ENCODE measurements at regions of chr4 and their contacts with region 1.

Region 1: GRCh38 chr4:1746265-1746691 is 25.0 kb downstream of the TACC3 start:
- DNase-seq: peak; percentile 96
- H3K4me3 ChIP-seq: no peak overlapping the region; a peak in 1 of 4 replicates
- H3K27ac ChIP-seq: no peak overlapping the region
- H3K4me1 ChIP-seq: peaks cover 0 to 7% of the 10 kb centered on the region in 2 experiments; a peak in 1 of 4 replicates
- H3K27me3 ChIP-seq: no peaks in the 10 kb centered on the region
- CTCF ChIP-seq: peak; percentile 79
- EP300 ChIP-seq: no peak
- RAD21 ChIP-seq: peak; percentile 69

Region 2: GRCh38 chr4:1732911-1733310 is 13.4 kb before region 1 on chr4:
- CTCF ChIA-PET with region 1: interaction called, 11 read pairs
- POLR2A ChIA-PET with region 1: no interaction called
- DNase-seq: no peak
- H3K4me3 ChIP-seq: no peak overlapping the region
- H3K27ac ChIP-seq: no peak overlapping the region
- H3K4me1 ChIP-seq: peaks cover 4% of the 10 kb centered on the region in 2 experiments; a peak in 3 of 4 replicates
- H3K27me3 ChIP-seq: no peaks in the 10 kb centered on the region
- CTCF ChIP-seq: no peak
- EP300 ChIP-seq: no peak
- RAD21 ChIP-seq: no peak

Region 3: DNA sequence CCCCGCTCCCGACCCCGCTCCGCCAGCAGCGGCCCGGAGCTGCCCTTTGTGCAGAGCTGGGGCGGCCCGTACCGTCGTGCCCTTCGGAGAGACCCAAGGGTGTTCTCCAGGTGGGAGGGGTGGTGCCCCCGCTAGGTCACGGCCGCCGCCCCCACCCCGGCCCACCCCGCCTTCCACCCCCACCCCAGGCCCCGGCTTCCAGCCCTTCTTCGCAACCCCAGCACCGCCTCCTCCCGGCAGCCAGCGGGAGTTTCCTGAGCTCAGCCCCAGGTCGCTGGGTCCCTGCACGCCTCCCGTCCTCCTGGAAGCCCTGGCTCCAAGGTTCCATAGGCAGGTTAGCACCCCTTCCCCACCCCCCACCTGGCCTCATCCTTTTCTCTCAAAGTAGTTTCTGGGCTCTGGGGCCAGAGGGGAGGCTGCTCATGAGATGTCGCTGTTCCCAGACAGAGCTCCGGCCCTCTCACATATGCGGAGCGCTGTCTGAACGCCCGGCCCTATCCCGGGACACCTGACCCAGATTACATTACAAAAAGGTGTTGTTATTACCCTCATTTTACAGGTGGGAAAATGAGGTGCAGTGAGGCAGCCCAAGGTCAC is 21.6 kb after region 1 on chr4:
- CTCF ChIA-PET with region 1: interaction called, 19 read pairs
- POLR2A ChIA-PET with region 1: no interaction called
- DNase-seq: peak; percentile 95
- H3K4me3 ChIP-seq: peak overlapping the region in 1 of 2 experiments; percentile 52; a peak in 2 of 4 replicates
- H3K27ac ChIP-seq: no peak overlapping the region; a peak in 1 of 4 replicates
- H3K4me1 ChIP-seq: peaks cover 0 to 19% of the 10 kb centered on the region in 2 experiments; a peak in 1 of 4 replicates
- H3K27me3 ChIP-seq: no peaks in the 10 kb centered on the region
- CTCF ChIP-seq: peak; percentile 37
- EP300 ChIP-seq: no peak
- RAD21 ChIP-seq: peak; percentile 27; the same call in 1 of the 2 replicates

Region 4: GRCh38 chr4:1784789-1785591 is 38.7 kb after region 1 on chr4:
- CTCF ChIA-PET with region 1: interaction called, 16 read pairs
- POLR2A ChIA-PET with region 1: no interaction called
- DNase-seq: peak; percentile 90
- H3K4me3 ChIP-seq: no peak overlapping the region
- H3K27ac ChIP-seq: no peak overlapping the region
- H3K4me1 ChIP-seq: peaks cover 0 to 8% of the 10 kb centered on the region in 2 experiments; a peak in 1 of 4 replicates
- H3K27me3 ChIP-seq: no peaks in the 10 kb centered on the region
- CTCF ChIP-seq: no peak
- EP300 ChIP-seq: no peak
- RAD21 ChIP-seq: no peak

Region 5: DNA sequence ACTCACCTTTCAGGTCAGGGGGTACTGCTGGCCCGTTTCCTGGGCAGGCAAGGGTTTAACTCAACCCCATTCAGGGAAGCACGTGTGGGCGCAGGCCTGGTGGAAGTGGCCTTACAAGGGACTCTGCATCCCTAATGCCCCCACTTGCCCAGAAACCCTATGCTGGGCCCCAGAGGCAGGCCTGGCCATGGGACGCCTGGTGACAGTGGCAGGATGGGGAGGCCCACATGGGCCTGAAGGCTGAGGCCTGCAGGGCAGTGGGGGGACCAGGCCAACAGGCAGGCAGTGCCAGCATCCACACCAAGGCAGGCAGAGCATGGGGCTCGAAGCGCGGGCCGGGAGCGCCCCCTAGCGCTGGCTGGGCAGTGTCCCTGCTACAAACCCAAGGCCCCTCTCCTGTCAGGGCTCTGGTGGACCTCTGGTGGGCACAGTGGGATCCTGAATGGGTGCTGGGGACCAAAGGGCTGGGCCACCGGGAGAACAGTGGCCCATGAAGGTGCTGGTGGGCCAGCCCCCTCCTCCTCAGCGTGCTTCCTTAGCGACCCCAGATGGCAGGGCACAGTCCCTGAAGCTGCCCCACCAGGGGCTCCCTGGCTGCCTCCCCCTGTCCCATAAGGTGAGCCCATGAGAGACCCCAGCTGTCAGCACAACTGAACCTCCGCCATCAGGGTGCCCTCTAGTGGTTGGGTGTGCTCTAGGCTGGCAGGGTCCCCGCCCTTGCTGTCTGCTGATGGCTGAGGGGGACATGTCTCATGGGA is 63.7 kb after region 1 on chr4:
- CTCF ChIA-PET with region 1: interaction called, 166 read pairs
- POLR2A ChIA-PET with region 1: no interaction called
- DNase-seq: peak; percentile 96
- H3K4me3 ChIP-seq: peak overlapping the region in 1 of 2 experiments; percentile 42; a peak in 1 of 4 replicates
- H3K27ac ChIP-seq: no peak overlapping the region
- H3K4me1 ChIP-seq: peaks cover 0 to 3% of the 10 kb centered on the region in 2 experiments; a peak in 1 of 4 replicates
- H3K27me3 ChIP-seq: no peaks in the 10 kb centered on the region
- CTCF ChIP-seq: peak; percentile 93
- EP300 ChIP-seq: no peak
- RAD21 ChIP-seq: peak; percentile 92

Region 6: DNA sequence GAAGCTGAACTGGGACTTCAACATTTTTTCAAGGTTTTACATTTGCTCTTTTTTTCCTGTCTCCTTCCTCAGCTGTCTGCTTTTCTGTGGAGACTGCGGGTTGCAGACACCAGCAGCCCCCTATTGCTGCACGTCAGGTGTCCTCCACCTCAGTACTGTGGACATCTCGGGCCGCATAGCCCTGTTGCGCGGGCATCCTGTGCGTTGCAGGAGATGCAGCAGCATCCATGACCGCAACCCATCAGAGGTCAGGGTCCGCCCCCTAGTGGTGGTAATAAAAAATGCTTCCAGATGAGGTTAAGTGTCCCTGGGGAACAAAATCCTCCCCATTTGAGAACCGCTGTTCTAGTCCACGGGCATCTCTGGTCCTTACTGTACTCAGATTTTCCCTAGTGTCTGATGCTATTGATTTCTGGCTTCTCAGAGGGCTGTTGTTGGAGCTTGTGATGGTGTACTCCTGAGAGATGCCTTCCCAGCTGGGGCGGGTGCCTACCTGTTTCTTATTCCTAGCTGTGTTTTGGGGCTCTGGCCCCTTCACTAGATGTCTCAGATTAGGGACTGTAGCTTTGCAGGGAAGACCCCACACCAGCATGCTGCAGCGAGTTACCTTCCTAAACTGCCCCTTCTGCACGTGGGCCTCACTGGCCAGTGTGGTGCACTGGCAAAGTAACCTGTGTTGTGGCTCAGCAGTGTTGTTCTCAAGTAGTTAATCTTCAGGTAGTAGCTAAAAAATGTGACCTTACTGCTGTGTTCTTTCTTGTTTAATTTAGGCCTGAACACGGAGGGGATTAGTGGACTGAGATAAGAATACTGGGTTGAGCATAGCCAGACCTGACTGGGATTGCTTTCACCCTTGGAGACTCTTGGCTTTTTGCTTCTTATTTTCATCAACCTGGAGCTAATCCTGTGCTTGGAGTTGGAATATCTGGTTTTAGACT is 153.1 kb after region 1 on chr4:
- CTCF ChIA-PET with region 1: interaction called, 65 read pairs
- POLR2A ChIA-PET with region 1: no interaction called
- DNase-seq: peak; percentile 86
- H3K4me3 ChIP-seq: peak overlapping the region in 1 of 2 experiments; percentile 9; a peak in 1 of 4 replicates
- H3K27ac ChIP-seq: peak overlapping the region in 1 of 2 experiments; percentile 48; a peak in 2 of 4 replicates
- H3K4me1 ChIP-seq: peaks cover 0 to 7% of the 10 kb centered on the region in 2 experiments; a peak in 1 of 4 replicates
- H3K27me3 ChIP-seq: no peaks in the 10 kb centered on the region
- CTCF ChIP-seq: peak; percentile 88
- EP300 ChIP-seq: no peak
- RAD21 ChIP-seq: peak; percentile 90

Measured in SK-N-SH (cell line).